ENCODE measurements at regions of chr5 and their contacts with region 1.

Region 1: DNA sequence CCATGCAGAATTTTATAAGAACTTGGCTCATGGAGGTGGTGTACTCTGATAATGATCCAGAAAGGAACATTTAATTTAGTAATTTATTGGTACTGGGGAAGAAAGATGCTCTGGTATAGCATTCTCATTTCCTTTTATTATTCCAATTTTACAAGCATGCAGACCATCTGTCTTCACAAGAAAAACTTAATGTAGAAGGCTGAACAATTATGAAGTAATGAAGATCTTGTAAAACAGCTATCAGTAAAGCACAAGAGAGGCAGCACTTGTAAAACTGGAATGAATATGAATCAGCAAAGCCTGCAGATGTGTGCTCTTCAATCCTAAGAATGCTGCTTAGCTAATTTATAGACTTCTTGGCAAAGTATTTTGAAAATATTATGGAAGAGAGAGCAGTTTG is 300.0 kb downstream of the YTHDC2 start:
- DNase-seq: no peak

Region 2: GRCh38 chr5:112511920-112512319 is 1301.5 kb before region 1 on chr5:
- intact Hi-C with region 1: loop called in 1 of 2 experiments (anchors 5 kb)
- DNase-seq: no peak

Region 3: GRCh38 chr5:113776832-113777525 is 36.5 kb before region 1 on chr5:
- intact Hi-C with region 1: loop called in 1 of 2 experiments (anchors 1 kb)
- DNase-seq: no peak

Region 4: GRCh38 chr5:115758356-115758755 is 1944.9 kb after region 1 on chr5:
- intact Hi-C with region 1: loop called in 1 of 2 experiments (anchors 5 kb)
- DNase-seq: no peak